Activated T-helper 1 cell treated with anti-CD3 and anti-CD28 coated beads, Interleukin-12 subunit alpha, Interleukin-12 subunit beta, Interleukin-2, Interleukin-4 antibody, amounts not matched to agents 30 ng/mL and 10 ng/mL and 1 ng/mL, durations not matched to agents 14 hours and 24 hours and 36 hours (primary cell): ENCODE measurements at regions of chr16 and their contacts with region 1.

Region 1: DNA sequence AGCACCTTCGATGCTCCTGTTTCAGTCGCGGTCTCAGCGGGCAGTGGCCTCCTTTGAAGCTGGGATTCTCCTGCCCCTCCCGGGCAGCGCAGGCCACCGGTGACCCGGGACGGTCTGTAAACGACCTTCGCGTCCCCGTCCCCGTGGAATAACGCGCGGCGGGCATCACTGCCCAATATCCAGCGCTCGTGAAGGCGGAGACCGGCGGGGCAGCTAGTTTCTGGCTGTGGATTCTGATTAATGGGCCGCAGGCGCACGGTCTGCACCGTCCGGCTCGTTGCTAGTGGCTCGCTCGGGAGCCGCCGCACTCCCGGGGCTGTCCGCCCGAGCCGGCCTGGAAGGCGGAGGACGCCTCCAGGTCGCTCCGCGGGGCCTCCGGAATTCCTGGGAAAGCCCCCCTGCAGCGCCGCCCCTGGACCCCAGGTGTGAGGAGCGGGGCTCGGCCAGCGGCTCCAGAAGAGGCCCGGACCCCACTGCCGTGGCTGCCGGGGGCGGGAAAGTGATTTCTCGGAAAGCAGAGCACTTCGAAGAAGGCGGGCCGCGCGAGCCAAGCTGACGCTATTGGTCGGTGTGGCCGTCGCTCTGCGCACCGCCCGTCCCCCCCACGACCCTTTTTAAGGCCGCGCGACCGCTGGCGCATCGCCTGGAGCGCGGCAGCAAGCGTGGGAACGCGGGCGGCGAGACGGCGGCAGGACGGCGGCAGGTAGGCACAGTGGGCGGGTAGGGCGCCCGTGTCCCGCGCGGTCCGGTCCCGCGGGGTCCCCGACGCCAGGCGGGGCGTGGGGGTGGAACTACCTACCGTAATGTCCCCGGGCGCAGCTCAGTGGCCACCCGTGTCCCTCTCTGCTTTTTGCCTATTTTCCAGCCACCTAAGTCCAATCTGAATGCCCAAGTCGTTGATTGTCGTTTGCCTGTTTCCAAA is at the start of gene IRF8:
- DNase-seq: peak; percentile 67
- H3K4me3 Mint-ChIP-seq: peak within 1 kb of the TSS; percentile 88
- H3K27ac Mint-ChIP-seq: peak within 1 kb of the TSS; percentile 78
- H3K4me1 Mint-ChIP-seq: peaks cover 60% of the 10 kb centered on the region
- H3K27me3 Mint-ChIP-seq: peaks cover 28% of the 10 kb centered on the region
- total RNA-seq, gene IRF8: 158 and 166 TPM in 2 replicates

Region 2: DNA sequence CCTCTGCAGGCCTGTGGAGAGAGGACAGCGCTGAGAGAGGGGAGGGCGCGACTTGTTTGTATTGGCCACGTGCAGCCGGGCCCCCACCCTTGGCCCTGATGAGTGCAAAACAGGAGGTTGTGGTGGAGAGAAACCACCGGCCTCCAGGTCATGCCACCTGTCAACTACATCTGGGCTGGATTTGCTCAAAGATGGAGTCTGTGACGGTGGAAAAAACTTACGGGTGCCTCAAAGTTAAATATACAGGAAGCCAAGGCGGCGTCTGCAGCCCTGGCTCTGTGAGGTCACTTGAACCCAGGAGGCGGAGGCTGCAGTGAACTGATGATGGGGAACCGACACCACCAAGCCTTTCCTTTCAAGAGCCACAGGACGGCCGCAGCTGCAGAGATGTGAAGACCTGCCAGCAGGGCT is 163.6 kb before region 1 on chr16:
- intact Hi-C with region 1: no loop called
- DNase-seq: peak; percentile 8
- H3K4me3 Mint-ChIP-seq: no peak overlapping the region
- H3K27ac Mint-ChIP-seq: no peak overlapping the region
- H3K4me1 Mint-ChIP-seq: peaks cover 8% of the 10 kb centered on the region
- H3K27me3 Mint-ChIP-seq: peaks cover 3% of the 10 kb centered on the region

Region 3: GRCh38 chr16:85821441-85822135 is 77.2 kb before region 1 on chr16:
- intact Hi-C with region 1: loop called (anchors 1 kb)
- DNase-seq: peak; percentile 68
- H3K4me3 Mint-ChIP-seq: no peak overlapping the region
- H3K27ac Mint-ChIP-seq: no peak overlapping the region
- H3K4me1 Mint-ChIP-seq: no peaks in the 10 kb centered on the region
- H3K27me3 Mint-ChIP-seq: peaks cover 8% of the 10 kb centered on the region

Region 4: GRCh38 chr16:85869785-85870558 is 28.8 kb before region 1 on chr16:
- intact Hi-C with region 1: loop called (anchors 1 kb)
- DNase-seq: no peak
- H3K4me3 Mint-ChIP-seq: no peak overlapping the region
- H3K27ac Mint-ChIP-seq: peak overlapping the region; percentile 31
- H3K4me1 Mint-ChIP-seq: peaks cover 28% of the 10 kb centered on the region
- H3K27me3 Mint-ChIP-seq: peaks cover 29% of the 10 kb centered on the region

Region 5: DNA sequence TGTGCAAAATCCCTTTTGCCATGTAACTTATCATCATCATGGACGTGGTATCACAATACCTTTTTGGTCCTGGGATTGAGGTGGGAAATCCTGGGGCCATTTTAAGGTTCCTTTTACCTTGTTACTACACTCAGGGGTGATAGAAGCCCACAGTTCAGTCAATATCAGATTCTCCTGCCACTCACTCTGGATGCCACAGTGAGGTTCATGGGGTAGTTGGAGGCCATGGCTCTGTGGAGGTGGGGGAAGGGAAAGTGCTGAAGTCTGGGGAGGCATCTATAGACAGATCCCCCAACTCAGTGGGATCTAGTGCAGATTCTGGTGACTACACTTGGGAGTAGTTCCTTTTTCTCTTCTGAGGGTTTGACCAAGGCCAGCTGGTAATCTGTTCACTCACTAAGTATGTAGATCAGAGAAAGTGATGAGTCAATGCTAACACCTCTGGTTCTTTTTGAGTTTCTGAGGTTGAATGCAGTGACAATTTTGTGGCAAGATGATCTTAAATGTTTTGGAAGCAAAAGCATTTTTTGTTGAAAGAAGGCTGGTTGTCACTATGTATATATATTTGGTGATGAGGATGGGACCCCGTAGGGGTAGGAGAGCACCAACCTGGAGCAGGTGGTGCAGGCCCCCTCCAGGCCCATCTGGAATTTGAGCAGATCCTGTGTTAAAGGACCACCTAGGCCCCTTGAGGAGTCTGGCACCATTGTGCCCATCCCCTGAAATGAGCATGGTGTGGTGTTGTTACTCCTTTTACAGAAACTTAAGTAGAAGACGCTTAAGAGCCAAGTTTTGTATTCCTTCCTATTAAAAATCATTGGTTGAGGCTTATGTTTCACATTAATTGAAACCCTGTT is 18.6 kb before region 1 on chr16:
- intact Hi-C with region 1: loop called (anchors 1 kb)
- DNase-seq: no peak
- H3K4me3 Mint-ChIP-seq: no peak overlapping the region
- H3K27ac Mint-ChIP-seq: no peak overlapping the region
- H3K4me1 Mint-ChIP-seq: peaks cover 26% of the 10 kb centered on the region
- H3K27me3 Mint-ChIP-seq: peaks cover 53% of the 10 kb centered on the region

Region 6: GRCh38 chr16:85888405-85889331 is 10.1 kb before region 1 on chr16:
- intact Hi-C with region 1: loop called (anchors 1 kb)
- DNase-seq: peak; percentile 18
- H3K4me3 Mint-ChIP-seq: peak overlapping the region; percentile 43
- H3K27ac Mint-ChIP-seq: peak overlapping the region; percentile 67
- H3K4me1 Mint-ChIP-seq: peaks cover 38% of the 10 kb centered on the region
- H3K27me3 Mint-ChIP-seq: peaks cover 21% of the 10 kb centered on the region

Region 7: GRCh38 chr16:86016201-86016871 is 117.6 kb after region 1 on chr16:
- intact Hi-C with region 1: loop called (anchors 1 kb)
- DNase-seq: peak; percentile 10
- H3K4me3 Mint-ChIP-seq: no peak overlapping the region
- H3K27ac Mint-ChIP-seq: no peak overlapping the region
- H3K4me1 Mint-ChIP-seq: no peaks in the 10 kb centered on the region
- H3K27me3 Mint-ChIP-seq: peaks cover 14% of the 10 kb centered on the region